Activated CD4-positive, alpha-beta T cell treated with anti-CD3 and anti-CD28 coated beads, Interleukin-2, amount 10 ng/mL, durations not matched to agents 24 days and 14 days (primary cell): ENCODE measurements at regions of chr3 and their contacts with region 1.

Region 1: DNA sequence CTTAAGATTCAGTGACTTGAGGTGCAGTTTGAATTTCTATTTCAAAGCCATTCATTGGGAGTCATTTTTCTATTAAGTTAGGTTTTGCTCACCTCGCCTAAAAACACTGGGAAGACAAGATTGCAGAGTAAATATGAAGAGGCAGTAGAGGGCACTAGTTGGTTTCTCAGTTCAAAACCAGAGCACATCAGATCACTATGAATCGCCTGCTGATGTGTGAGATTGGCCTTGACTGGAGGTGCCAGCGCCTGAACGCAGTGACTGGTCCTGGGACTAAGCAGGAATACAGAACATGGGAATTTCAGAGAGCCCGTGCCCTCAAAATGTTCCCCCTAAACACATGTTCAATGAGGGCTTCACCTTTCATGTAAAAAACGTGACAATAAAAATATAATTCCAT is 229.0 kb downstream of the ITPR1 start:
- DNase-seq: peak; percentile 80
- H3K4me3 Mint-ChIP-seq: no peak overlapping the region
- H3K27ac Mint-ChIP-seq: peak overlapping the region; percentile 68
- H3K4me1 Mint-ChIP-seq: peaks cover 61% of the 10 kb centered on the region
- H3K27me3 Mint-ChIP-seq: no peaks in the 10 kb centered on the region

Region 2: DNA sequence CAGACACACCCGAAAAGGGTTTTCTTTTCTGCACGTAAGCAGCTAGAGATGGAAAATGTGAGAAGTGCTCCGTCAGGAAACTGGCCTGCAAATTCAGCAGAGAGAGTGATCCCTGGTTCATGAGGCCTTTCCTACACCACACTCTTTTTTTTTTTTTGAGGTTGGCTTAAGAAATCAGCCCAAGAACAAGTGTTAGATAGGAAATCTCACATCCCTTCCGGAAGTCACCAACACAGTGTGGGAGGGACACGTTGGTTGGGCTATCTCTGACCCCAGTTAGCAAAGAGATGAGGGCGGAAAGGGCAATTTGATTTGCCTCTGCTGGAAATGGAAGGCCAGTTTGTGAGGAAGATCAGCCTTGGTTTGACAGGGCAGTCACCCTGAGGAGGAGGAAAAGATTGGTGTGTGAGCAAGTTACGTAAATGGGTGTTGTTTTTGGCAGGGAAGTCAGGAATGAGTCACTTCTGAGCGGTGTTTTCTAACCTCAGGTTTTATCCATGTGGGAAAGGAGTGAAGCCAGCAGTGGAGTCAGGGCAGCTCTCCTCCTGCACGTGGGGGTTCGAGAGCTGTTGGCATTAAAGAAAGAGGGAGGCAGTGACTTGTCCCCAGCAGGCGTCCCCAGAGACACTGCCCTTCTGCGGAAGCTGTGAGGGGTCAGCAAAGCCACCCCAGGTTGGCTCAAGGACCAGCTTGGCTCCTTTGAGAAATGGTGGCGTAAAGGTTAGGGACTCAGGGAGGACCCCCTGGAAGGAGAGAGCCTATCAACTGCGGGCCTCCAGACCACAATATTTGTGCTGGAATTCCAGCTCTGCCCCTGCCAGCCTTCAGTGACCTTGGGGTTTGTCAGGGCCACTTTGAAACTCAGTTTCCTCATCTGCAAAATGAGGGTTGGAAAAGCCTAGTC is 19.6 kb after region 1 on chr3:
- intact Hi-C with region 1: loop called (anchors 2 kb)
- DNase-seq: peak; percentile 71
- H3K4me3 Mint-ChIP-seq: peak overlapping the region; percentile 47
- H3K27ac Mint-ChIP-seq: peak overlapping the region; percentile 89
- H3K4me1 Mint-ChIP-seq: peaks cover 66% of the 10 kb centered on the region
- H3K27me3 Mint-ChIP-seq: no peaks in the 10 kb centered on the region

Region 3: DNA sequence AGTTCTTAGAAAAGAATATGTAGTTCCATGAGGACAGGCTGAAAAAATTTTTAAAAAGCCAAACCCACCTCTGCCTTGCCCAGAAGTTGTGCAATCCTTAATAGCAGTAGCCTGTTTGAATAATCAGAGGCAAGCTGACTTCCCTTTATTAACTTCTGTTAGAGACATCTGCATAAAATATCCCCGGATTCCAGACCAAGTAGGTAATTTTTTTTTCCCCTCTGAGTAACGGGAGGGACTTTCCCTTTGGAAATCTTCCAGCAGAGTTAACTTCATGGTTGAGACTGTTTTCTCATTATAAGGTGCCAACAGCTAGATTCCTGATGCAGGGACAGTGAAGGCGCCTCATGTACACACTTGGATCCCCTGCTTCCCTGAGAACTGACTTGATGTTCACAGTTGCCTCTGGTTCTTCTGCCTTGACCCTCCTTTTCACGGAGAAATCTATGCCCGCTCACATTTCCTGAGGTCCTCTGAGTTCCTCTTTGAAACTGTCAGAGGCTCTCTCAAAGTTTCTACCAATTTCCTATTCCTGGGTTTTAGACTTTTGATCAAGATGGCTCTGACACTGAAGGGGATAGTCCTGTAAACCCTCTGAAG is 29.5 kb after region 1 on chr3:
- intact Hi-C with region 1: loop called (anchors 5 kb)
- DNase-seq: no peak
- H3K4me3 Mint-ChIP-seq: peak overlapping the region; percentile 54
- H3K27ac Mint-ChIP-seq: peak overlapping the region; percentile 92
- H3K4me1 Mint-ChIP-seq: peaks cover 63% of the 10 kb centered on the region
- H3K27me3 Mint-ChIP-seq: no peaks in the 10 kb centered on the region

Region 4: GRCh38 chr3:4821975-4822374 is 99.9 kb after region 1 on chr3:
- intact Hi-C with region 1: loop called (anchors 2 kb)
- DNase-seq: peak; percentile 93
- H3K4me3 Mint-ChIP-seq: peak overlapping the region; percentile 75
- H3K27ac Mint-ChIP-seq: peak overlapping the region; percentile 97
- H3K4me1 Mint-ChIP-seq: peaks cover 84% of the 10 kb centered on the region
- H3K27me3 Mint-ChIP-seq: no peaks in the 10 kb centered on the region

Region 5: DNA sequence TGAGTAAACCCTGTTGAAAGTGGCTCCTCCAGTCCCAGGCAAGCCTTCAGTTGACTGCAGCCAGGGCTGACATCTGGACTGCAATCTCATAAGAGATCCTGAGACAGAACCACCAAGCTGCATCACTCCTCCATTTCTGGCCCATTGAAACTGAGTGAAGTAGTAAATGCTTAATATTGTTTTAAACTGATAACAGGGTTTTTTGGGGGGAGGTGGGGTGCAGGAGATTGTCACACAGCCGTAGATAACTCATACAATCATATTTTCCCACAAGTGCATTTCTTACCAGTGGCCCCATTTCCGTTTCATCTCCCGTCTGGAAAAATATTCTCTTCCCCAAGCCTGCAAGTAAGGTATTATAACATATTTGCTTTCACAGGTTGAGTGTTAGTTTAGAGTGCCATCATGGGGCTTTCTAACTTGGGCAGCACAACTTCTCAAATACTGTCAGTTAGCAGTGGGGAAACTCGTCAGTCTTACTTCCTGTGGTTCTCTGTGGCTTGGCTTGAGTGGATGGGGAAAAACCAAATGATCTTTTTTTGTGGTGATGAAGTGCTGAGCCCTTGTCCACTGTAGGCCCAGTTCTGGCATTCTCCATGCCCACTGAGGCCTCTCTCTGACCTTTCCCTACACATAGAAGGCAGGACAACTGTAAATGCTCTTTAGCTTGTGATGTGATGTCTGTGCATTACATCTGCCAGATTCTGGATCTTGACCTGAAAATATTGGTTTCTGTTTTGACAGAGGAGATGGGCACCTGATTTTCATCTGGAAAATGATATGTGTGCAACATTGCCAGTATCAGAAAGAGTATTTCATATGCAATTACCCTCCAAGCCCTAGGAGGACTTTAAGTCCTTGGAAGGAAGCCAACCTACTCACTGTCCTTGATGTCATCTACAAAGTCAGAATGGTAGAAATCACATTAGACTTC is 167.1 kb after region 1 on chr3:
- intact Hi-C with region 1: loop called (anchors 1 kb)
- DNase-seq: peak; percentile 87
- H3K4me3 Mint-ChIP-seq: peak overlapping the region; percentile 49
- H3K27ac Mint-ChIP-seq: peak overlapping the region; percentile 89
- H3K4me1 Mint-ChIP-seq: peaks cover 44% of the 10 kb centered on the region
- H3K27me3 Mint-ChIP-seq: no peaks in the 10 kb centered on the region

Region 6: DNA sequence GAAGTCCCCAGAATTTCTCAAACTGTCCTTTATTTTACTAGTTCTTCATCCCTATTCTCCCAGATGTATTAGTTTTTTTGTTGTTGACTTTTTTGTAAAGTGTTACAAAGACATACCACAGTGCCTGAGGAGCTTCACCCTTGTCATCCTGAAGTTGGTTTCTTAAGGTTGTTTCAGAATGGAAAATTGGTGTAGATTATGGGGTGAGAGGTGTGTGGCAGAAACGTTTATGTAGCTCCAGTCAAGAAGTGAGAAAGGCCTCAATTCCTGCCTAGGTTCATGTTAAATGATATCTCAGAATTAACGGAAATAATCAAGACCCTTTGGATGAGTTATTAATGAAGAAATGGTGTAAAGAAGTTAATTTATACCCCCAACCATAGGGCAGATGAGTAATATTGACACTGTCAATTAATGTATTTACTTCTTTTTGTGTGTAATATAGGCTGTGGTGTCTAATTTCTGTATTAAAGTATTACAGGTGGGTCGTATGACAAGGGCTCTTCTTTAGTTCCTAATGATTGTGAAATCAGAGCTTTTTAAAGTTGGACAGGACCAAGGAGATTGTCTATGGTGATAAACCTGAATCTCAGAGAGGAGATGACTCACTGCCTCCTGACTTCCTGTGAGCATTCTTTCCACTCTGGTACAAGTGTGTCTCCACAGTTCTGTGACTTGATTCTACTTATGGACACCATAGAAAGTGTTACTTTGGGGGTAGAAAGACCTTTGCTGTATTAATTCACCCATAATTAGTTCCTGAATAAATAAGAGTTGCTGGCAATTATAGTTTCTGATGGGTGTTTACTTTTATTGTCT is 472.4 kb after region 1 on chr3:
- intact Hi-C with region 1: loop called (anchors 5 kb)
- DNase-seq: peak; percentile 85
- H3K4me3 Mint-ChIP-seq: peak overlapping the region; percentile 79
- H3K27ac Mint-ChIP-seq: peak overlapping the region; percentile 94
- H3K4me1 Mint-ChIP-seq: peaks cover 85% of the 10 kb centered on the region
- H3K27me3 Mint-ChIP-seq: no peaks in the 10 kb centered on the region